ENCODE measurements at regions of chr9 and their contacts with region 1.

Region 1: GRCh38 chr9:87290241-87291052 is 207.2 kb upstream of the DAPK1 start:
- DNase-seq: no peak

Region 2: DNA sequence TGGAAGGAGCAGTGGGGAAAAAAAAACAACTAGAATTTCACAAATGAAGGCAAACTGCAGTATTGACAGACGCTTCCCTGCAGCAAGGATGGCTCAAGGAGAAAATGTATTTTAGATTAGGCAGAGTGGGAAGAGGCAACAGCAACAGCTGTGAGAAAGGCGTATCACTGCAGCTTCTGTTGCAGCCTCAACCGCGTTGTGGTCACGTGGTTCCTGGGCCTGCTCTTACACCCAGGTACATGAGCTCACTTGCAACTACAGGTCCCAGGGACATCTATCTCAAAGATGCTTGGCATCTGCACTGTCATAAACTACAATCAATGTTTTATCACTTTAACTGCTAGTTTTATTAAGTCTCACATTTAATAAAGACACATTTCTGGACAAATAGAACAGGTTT is 1155.1 kb before region 1 on chr9:
- intact Hi-C with region 1: no loop called
- DNase-seq: no peak

Region 3: DNA sequence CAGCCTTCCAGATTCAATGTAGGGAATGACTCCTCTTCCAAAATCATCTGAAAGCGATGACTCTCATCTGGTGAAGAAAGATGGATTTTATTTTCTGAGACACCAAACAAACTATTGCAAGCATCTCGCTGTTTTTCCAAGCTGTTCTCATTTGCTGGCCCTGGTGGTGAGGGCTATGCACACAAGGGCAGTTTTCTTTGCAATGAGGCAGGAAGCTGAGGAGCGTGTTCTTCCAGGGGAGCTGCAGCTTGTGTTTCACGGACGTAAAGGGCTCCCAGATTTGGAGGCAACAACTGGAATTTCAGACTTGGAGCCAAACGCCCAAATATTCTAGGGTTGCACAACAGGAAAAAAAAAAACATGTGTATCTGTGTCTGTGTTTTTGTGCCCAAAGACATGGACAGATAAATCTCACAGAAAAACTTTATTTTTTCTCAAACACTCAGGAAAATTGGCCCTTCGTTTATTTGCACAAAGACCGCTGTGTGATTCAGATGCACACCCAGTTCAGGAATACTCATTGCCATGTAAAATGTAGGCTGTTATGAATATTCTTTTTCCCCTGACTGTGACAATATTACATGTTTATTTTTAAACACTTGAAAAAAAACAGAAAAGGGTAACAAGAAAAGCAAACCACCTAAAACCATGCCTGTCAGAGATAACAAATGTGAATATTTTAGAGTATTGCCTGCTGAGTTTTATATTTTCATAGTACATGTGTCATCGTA is 494.5 kb before region 1 on chr9:
- intact Hi-C with region 1: loop called in 1 of 2 experiments (anchors 10 kb)
- DNase-seq: no peak

Region 4: DNA sequence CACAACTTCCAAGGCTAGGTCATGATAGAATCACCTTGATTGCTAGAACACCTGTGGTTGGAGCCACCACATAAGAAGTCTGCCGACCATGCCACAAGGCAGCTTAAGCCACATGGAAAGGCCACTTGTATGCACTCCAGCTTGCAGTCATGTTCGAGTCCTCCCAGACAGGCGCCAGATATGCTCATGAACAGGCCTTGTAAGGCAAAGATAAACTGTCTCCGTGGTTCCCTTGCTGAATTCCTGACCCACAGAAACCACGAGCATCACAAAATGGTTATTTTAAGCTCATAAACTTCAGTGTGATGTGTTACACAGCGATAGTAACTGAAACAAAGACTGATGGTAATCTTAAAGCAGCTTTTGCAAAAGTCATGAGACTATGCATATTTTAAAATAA is 18.8 kb after region 1 on chr9:
- intact Hi-C with region 1: no loop called
- DNase-seq: no peak

Measured in posterior vena cava (tissue), 2 donors.